IMR-90 (cell line): ENCODE measurements at regions of chr1 and their contacts with region 1.

Region 1: GRCh38 chr1:154741741-154742495 is 128.2 kb downstream of the KCNN3 start:
- DNase-seq: no peak
- ATAC-seq: no peak
- H3K4me3 ChIP-seq: no peak overlapping the region
- H3K27ac ChIP-seq: no peak overlapping the region
- H3K4me1 ChIP-seq: no peaks in the 10 kb centered on the region
- H3K27me3 ChIP-seq: peaks cover 46% of the 10 kb centered on the region
- CTCF ChIP-seq: no peak
- POLR2A ChIP-seq: no peak
- RAD21 ChIP-seq: no peak

Region 2: GRCh38 chr1:154714638-154715037 is 27.3 kb before region 1 on chr1:
- CTCF ChIA-PET with region 1: no interaction called
- POLR2A ChIA-PET with region 1: no interaction called
- dilution Hi-C with region 1: no loop called
- in situ Hi-C with region 1: no loop called
- intact Hi-C with region 1: loop called (anchors 1 kb)
- DNase-seq: peak; percentile 10
- ATAC-seq: no peak
- H3K4me3 ChIP-seq: no peak overlapping the region
- H3K27ac ChIP-seq: no peak overlapping the region
- H3K4me1 ChIP-seq: no peaks in the 10 kb centered on the region
- H3K27me3 ChIP-seq: peaks cover 39% of the 10 kb centered on the region
- CTCF ChIP-seq: no peak
- POLR2A ChIP-seq: no peak
- RAD21 ChIP-seq: no peak